PC-3 (cell line): ENCODE measurements at regions of chr6 and their contacts with region 1.

Region 1: DNA sequence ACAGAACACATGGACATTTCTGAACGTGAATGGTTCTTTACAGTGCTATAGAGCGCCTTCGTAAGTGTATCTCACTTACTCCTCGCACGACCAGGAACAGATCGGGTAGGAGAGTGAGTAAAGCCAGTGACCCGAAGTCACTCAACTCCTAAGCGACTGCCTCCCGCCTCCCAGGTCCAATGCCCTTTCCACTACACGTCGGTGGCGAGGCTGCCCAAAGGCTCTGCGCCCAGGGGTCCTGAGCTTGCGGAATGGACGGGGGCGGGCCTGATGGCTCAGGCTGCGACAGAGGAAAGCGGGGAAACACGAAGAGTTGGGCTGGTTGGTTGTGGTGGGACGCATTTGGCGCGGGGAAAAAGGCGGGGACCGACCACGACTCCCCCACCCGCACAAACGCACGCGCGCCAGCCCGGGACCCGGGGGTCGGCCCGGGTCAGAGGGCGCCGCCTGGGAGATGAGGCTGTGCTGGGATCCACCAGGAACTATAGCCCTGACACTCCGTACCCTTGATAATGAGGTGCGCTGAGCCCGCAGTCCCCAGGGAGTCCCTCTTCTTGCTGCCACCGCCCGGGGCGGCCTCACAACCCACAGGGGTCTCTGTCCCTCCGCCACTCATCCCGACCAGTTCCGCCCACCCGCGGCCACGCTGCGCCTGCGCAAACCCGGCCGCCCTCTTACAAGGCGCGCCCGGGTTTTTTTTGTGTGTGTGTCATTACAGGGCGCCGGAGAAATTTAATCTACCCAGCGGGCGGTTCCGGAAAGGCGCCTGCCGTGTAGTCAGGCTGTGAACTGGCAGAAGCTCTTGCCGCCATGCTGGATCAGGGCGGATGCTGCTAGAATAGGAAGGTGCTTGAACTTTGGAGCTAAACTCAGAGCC is at the start of gene BLOC1S5:
- DNase-seq: peak; percentile 96
- ATAC-seq: peak; percentile 90
- H3K4me3 ChIP-seq: peak within 1 kb of the TSS; percentile 93
- H3K27ac ChIP-seq: peak within 1 kb of the TSS; percentile 19
- H3K4me1 ChIP-seq: 0 out of 2 replicates have a peak, but pooled peaks cover 7% of the 10 kb centered on the region
- H3K27me3 ChIP-seq: no peaks in the 10 kb centered on the region
- CTCF ChIP-seq: no peak
- total RNA-seq, gene BLOC1S5: 5.8 and 9.1 TPM in 2 replicates

Region 2: DNA sequence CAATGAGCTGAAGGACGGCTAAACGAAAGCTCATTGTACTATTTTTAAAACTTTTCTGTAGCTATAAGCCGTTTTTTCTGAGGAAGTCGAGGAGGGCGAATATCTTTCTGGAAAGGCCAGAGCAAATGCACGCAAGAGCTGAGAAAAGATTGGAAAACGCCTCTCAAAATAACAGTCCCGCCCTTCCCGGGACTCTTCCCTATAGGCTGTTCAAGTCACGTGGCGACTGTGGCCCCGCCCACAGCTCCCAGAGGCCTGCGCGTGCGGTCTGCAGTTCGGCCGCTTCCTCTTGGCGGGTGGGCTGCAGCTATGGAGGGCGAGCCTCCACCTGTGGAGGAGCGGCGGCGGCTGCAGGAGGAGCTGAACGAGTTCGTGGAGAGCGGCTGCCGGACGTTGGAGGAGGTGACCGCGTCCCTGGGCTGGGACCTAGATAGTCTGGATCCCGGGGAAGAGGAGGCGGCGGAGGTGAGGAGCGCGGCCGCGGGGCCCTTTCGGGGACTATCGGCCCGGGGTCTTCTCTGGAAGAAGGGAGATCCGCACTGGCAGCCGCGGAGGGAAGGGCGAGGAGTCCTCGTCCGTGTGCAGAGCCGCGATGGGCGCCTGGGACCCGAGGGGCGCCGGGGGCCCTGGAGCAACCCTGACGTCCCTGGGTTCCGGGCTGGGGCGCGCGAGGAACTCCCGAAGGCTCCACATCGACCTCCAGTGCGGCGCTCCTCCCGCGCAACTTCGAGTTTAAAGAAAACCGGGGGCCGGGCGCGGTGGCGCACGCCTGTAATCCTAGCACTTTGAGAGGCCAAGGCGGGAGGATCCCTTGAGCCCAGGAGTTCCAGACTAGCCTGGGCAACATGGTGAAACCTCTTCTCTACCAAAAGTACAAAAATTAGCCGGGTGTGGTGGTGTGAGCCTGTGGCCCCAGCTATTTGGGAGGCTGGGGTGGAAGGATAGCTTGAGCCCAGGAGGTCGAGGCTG is 473.8 kb before region 1 on chr6 and contains the start of gene SNRNP48:
- CTCF ChIA-PET with region 1: no interaction called
- POLR2A ChIA-PET with region 1: no interaction called
- intact Hi-C with region 1: no loop called
- DNase-seq: peak; percentile 95
- ATAC-seq: peak; percentile 97
- H3K4me3 ChIP-seq: peak within 1 kb of the TSS; percentile 94
- H3K27ac ChIP-seq: no peak within 1 kb of the TSS
- H3K4me1 ChIP-seq: peaks cover 18% of the 10 kb centered on the region
- H3K27me3 ChIP-seq: no peaks in the 10 kb centered on the region
- CTCF ChIP-seq: no peak
- total RNA-seq, gene SNRNP48: 7.0 and 7.7 TPM in 2 replicates

Region 3: DNA sequence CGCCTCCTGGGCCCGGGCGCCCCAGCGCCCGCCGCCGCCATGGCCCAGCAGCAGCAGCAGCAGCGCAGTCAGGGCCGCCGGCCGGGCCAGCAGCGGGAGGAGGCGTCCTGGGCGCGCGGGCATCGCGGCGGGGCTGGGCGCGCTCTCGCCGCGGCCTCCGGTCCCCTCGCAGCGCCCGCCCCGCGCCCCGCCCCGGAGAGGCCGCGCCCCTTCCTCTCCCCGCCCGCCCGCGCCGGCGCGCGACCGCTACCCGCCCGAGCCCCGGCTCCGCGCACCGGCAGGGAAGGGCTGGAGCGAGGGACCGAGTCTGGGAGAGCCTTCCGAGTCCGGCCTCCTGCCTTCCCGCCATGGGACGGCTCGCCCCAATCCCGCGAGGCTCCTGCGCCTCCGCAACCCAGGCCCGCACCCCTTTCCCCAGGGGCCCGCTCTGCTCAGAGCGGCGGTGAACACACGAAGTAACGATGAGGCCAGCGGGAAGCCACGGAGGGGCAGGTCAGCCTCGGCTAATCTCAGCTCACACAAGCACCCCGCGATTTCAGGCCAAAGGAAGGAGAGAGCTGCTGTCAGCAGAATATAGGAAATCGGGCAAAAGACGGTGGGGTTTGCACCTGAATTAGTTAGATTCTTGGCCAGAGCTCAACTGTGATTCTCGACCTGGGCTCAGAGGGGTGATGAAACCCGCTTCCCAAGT is 153.2 kb before region 1 on chr6 and contains the start of gene TXNDC5:
- CTCF ChIA-PET with region 1: no interaction called
- POLR2A ChIA-PET with region 1: no interaction called
- intact Hi-C with region 1: loop called (anchors 5 kb)
- DNase-seq: peak; percentile 74
- ATAC-seq: peak; percentile 80
- H3K4me3 ChIP-seq: peak within 1 kb of the TSS; percentile 91
- H3K27ac ChIP-seq: peak within 1 kb of the TSS; percentile 48
- H3K4me1 ChIP-seq: peaks cover 15% of the 10 kb centered on the region
- H3K27me3 ChIP-seq: no peaks in the 10 kb centered on the region
- CTCF ChIP-seq: no peak
- total RNA-seq, gene TXNDC5: 218 and 221 TPM in 2 replicates

Region 4: GRCh38 chr6:7974938-7975763 is 88.8 kb before region 1 on chr6:
- CTCF ChIA-PET with region 1: no interaction called
- POLR2A ChIA-PET with region 1: no interaction called
- intact Hi-C with region 1: no loop called
- DNase-seq: peak; percentile 98
- ATAC-seq: peak; percentile 82
- H3K4me3 ChIP-seq: peak overlapping the region; percentile 41
- H3K27ac ChIP-seq: peak overlapping the region; percentile 30
- H3K4me1 ChIP-seq: peaks cover 34% of the 10 kb centered on the region
- H3K27me3 ChIP-seq: no peaks in the 10 kb centered on the region
- CTCF ChIP-seq: no peak

Region 5: DNA sequence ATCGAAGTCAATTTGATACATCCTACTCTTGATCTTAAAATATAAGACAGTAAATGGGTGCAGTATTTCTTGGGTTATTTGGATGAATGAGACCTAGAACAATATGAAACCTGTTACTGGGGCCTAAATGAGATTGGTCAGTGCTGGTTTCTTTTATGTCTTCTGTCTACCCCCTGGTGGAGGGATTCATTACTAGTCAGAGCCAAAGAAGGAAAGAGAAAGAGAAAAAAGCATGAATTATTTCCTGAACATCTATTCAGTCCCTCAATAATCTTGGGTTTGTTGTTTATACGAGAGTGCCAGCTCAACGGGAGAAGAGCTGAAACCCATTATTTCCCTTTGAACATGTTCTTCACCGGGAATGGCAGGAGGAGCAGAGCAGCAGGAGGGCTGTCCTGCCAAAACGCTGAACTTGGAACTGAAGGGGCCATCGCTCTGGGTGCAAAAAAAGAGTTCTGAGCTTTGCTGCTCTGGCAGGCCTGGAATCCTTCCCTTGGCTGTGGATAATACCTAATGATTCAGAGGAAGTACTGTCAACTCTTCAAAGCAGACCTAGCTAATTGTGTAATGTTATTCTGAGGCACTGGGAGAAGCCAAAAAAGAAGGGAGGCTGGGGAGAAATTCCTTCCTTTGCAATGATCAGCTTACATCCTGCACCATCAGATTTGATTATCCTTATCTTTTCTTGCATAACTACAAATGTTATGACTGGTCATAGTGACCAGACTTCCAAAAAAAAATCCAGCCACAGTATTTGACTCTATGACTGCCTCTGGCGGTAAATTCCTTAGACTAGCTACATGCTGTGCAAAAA is 71.8 kb before region 1 on chr6:
- CTCF ChIA-PET with region 1: interaction called, 3 read pairs
- POLR2A ChIA-PET with region 1: no interaction called
- intact Hi-C with region 1: loop called (anchors 2 kb)
- DNase-seq: peak; percentile 60
- ATAC-seq: peak; percentile 82
- H3K4me3 ChIP-seq: no peak overlapping the region
- H3K27ac ChIP-seq: no peak overlapping the region
- H3K4me1 ChIP-seq: no peaks in the 10 kb centered on the region
- H3K27me3 ChIP-seq: no peaks in the 10 kb centered on the region
- CTCF ChIP-seq: peak; percentile 88

Region 6: GRCh38 chr6:8006208-8006607 is 57.8 kb before region 1 on chr6:
- CTCF ChIA-PET with region 1: interaction called, 4 read pairs
- POLR2A ChIA-PET with region 1: no interaction called
- intact Hi-C with region 1: loop called (anchors 5 kb)
- DNase-seq: peak; percentile 55
- ATAC-seq: peak; percentile 54
- H3K4me3 ChIP-seq: no peak overlapping the region
- H3K27ac ChIP-seq: no peak overlapping the region
- H3K4me1 ChIP-seq: no peaks in the 10 kb centered on the region
- H3K27me3 ChIP-seq: no peaks in the 10 kb centered on the region
- CTCF ChIP-seq: peak; percentile 72

Region 7: DNA sequence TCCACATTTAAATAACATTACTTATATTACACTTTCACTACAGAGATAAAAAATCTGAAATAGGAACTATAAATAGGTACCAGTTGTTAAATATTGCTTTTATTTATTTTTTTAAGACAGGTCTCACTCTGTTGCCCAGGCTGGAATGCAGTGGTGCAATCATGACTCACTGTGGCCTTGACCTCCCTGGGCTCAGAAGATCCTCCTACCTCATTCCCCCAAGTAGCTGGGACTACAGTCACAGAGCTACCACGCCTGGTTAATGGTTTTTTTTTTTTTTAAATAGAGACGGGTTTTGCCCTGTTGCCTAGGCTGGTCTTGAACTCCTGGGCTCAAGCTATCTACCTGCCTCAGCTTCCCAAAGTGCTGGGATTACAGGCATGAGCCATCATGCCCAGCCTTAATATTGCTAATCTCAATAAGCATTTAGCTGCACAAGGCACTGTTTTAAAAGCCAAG is 21.1 kb after region 1 on chr6:
- CTCF ChIA-PET with region 1: no interaction called
- POLR2A ChIA-PET with region 1: no interaction called
- intact Hi-C with region 1: loop called (anchors 2 kb)
- DNase-seq: peak; percentile 91
- ATAC-seq: peak; percentile 77
- H3K4me3 ChIP-seq: no peak overlapping the region
- H3K27ac ChIP-seq: peak overlapping the region; percentile 86
- H3K4me1 ChIP-seq: peaks cover 57% of the 10 kb centered on the region
- H3K27me3 ChIP-seq: no peaks in the 10 kb centered on the region
- CTCF ChIP-seq: no peak

Region 8: GRCh38 chr6:8219352-8219943 is 155.4 kb after region 1 on chr6:
- CTCF ChIA-PET with region 1: interaction called, 4 read pairs
- POLR2A ChIA-PET with region 1: no interaction called
- intact Hi-C with region 1: loop called (anchors 2 kb)
- DNase-seq: peak; percentile 69
- ATAC-seq: peak; percentile 78
- H3K4me3 ChIP-seq: peak overlapping the region; percentile 37; the same call in 1 of the 2 replicates
- H3K27ac ChIP-seq: no peak overlapping the region
- H3K4me1 ChIP-seq: no peaks in the 10 kb centered on the region
- H3K27me3 ChIP-seq: peaks cover 31% of the 10 kb centered on the region
- CTCF ChIP-seq: peak; percentile 81